ENCODE measurements at regions of chr4 and their contacts with region 1.

Region 1: GRCh38 chr4:99462875-99463464 is 27.8 kb upstream of the ADH7 start:
- DNase-seq: peak; percentile 63
- H3K4me3 Mint-ChIP-seq: no peak overlapping the region
- H3K27ac Mint-ChIP-seq: no peak overlapping the region
- H3K4me1 Mint-ChIP-seq: no peaks in the 10 kb centered on the region
- H3K27me3 Mint-ChIP-seq: no peaks in the 10 kb centered on the region

Region 2: DNA sequence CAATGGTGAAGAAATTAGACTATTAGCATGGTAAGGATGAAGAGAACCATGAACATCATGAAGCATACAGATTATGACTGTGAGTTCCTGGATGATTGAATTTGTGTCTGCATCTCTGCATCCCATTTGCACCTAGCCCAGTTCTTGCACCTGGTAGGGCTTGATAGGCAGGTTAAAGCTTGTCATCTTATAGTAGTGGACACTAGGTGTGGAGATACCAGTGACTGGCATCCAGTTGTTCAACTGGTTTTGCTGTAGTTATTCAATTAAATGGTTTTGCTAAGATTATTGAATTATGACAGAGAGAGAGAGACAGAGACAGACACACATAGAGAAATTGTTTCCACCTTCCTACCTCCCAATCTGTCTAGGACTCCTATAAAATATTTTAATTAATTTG is 32.9 kb before region 1 on chr4:
- CTCF ChIA-PET with region 1: interaction called, 10 read pairs
- DNase-seq: no peak
- H3K4me3 Mint-ChIP-seq: no peak overlapping the region
- H3K27ac Mint-ChIP-seq: no peak overlapping the region
- H3K4me1 Mint-ChIP-seq: no peaks in the 10 kb centered on the region
- H3K27me3 Mint-ChIP-seq: no peaks in the 10 kb centered on the region

Measured in activated naive CD4-positive, alpha-beta T cell treated with anti-CD3 and anti-CD28 coated beads, Interleukin-2, amount 10 ng/mL, durations not matched to agents 7 days and 5 days (primary cell).